PC-9 (cell line): ENCODE measurements at regions of chr16 and their contacts with region 1.

Region 1: GRCh38 chr16:106623-107324 is 28.7 kb downstream of the MPG start:
- DNase-seq: peak; percentile 55 to 59
- H3K4me3 ChIP-seq: no peak overlapping the region
- H3K27ac ChIP-seq: no peak overlapping the region
- H3K4me1 ChIP-seq: peaks cover 10% of the 10 kb centered on the region
- H3K27me3 ChIP-seq: no peaks in the 10 kb centered on the region
- CTCF ChIP-seq: peak; percentile 84

Region 2: GRCh38 chr16:117379-118365 is 10.9 kb after region 1 on chr16:
- CTCF ChIA-PET with region 1: no interaction called
- POLR2A ChIA-PET with region 1: interaction called, 14 read pairs
- intact Hi-C with region 1: no loop called
- DNase-seq: peak; percentile 58 to 83
- H3K4me3 ChIP-seq: no peak overlapping the region
- H3K27ac ChIP-seq: no peak overlapping the region
- H3K4me1 ChIP-seq: peaks cover 15% of the 10 kb centered on the region
- H3K27me3 ChIP-seq: no peaks in the 10 kb centered on the region
- CTCF ChIP-seq: peak; percentile 87

Region 3: DNA sequence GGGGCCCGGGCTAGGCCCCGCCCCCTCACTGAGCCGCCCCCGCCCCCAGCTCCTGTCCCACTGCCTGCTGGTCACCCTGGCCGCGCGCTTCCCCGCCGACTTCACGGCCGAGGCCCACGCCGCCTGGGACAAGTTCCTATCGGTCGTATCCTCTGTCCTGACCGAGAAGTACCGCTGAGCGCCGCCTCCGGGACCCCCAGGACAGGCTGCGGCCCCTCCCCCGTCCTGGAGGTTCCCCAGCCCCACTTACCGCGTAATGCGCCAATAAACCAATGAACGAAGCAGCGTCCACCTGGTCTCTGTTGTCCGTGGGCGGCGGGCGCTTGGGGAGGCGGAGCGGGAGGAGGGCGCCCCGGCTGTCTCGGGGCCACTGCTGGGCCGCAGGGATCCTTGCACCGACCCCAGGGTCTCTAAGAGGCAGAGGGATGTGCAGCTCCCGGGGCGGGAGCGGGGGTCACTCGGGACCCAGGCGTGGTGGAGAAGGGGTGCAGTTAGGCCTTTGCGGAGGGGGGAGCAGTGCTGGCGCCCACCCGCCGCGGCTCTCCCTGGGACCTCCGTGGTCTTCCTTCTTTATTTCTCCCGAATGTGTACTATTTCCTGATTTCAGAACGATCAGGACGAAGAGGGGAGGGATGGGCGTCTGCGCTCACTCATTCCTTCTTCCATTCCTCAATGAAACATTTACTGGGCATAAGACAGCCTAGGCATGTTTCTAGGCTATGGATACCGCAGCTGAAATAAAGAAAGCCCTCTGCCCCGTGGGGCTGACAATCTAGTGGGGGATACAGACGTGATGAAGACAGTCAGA is 47.7 kb after region 1 on chr16:
- CTCF ChIA-PET with region 1: no interaction called
- POLR2A ChIA-PET with region 1: no interaction called
- intact Hi-C with region 1: no loop called
- DNase-seq: peak in 1 of 2 experiments; percentile 28
- H3K4me3 ChIP-seq: peak overlapping the region; percentile 59
- H3K27ac ChIP-seq: no peak overlapping the region
- H3K4me1 ChIP-seq: peaks cover 5% of the 10 kb centered on the region; the same call in 1 of the 2 replicates
- H3K27me3 ChIP-seq: peaks cover 14% of the 10 kb centered on the region
- CTCF ChIP-seq: no peak

Region 4: DNA sequence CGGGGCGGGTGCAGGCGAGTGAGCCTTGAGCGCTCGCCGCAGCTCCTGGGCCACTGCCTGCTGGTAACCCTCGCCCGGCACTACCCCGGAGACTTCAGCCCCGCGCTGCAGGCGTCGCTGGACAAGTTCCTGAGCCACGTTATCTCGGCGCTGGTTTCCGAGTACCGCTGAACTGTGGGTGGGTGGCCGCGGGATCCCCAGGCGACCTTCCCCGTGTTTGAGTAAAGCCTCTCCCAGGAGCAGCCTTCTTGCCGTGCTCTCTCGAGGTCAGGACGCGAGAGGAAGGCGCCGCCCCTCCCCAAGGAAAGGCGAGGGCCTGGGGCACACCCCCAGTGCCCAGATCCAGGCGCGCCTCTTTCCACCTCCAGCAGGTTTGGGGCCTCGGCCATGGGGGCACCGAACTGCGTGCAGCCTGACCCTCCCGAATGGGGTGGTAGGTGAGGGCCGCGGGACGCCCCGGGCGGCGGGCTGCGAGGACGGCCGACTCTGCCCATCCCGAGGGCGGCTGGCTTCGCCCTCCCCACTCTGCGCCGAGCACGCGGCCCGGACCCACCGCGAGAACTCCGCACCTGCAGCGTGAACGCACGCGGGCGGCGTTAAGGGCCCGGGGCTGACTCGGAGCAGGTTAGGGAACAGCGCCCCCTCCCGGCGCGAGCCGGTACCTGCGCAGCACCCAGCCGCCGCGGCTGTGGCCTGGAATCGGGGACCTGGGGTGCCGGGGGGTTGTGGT is 74.3 kb after region 1 on chr16:
- CTCF ChIA-PET with region 1: interaction called, 6 read pairs
- POLR2A ChIA-PET with region 1: interaction called, 11 read pairs
- intact Hi-C with region 1: loop called (anchors 1 kb)
- DNase-seq: peak in 1 of 2 experiments; percentile 85
- H3K4me3 ChIP-seq: no peak overlapping the region
- H3K27ac ChIP-seq: no peak overlapping the region
- H3K4me1 ChIP-seq: no peaks in the 10 kb centered on the region
- H3K27me3 ChIP-seq: 0 out of 2 replicates have a peak, but pooled peaks cover 4% of the 10 kb centered on the region
- CTCF ChIP-seq: peak; percentile 93

Region 5: GRCh38 chr16:361872-362701 is 255.3 kb after region 1 on chr16:
- CTCF ChIA-PET with region 1: interaction called, 10 read pairs
- POLR2A ChIA-PET with region 1: no interaction called
- intact Hi-C with region 1: loop called (anchors 1 kb)
- DNase-seq: peak; percentile 74 to 91
- H3K4me3 ChIP-seq: no peak overlapping the region
- H3K27ac ChIP-seq: no peak overlapping the region
- H3K4me1 ChIP-seq: no peaks in the 10 kb centered on the region
- H3K27me3 ChIP-seq: peaks cover 6% of the 10 kb centered on the region; the same call in 1 of the 2 replicates
- CTCF ChIP-seq: peak; percentile 79